ENCODE measurements at regions of chr13 and their contacts with region 1.

Region 1: GRCh38 chr13:99331881-99332293 is 24.7 kb upstream of the GPR183 start:
- DNase-seq: peak; percentile 79
- ATAC-seq: peak; percentile 89
- H3K4me3 ChIP-seq: no peak overlapping the region
- H3K27ac ChIP-seq: peak overlapping the region; percentile 66; the same call in 1 of the 2 replicates
- H3K4me1 ChIP-seq: peaks cover 21% of the 10 kb centered on the region
- H3K27me3 ChIP-seq: no peaks in the 10 kb centered on the region
- CTCF ChIP-seq: no peak
- EP300 ChIP-seq: peak; percentile 39 to 52; a peak in 2 of 4 replicates
- POLR2A ChIP-seq: no peak
- RAD21 ChIP-seq: no peak

Region 2: DNA sequence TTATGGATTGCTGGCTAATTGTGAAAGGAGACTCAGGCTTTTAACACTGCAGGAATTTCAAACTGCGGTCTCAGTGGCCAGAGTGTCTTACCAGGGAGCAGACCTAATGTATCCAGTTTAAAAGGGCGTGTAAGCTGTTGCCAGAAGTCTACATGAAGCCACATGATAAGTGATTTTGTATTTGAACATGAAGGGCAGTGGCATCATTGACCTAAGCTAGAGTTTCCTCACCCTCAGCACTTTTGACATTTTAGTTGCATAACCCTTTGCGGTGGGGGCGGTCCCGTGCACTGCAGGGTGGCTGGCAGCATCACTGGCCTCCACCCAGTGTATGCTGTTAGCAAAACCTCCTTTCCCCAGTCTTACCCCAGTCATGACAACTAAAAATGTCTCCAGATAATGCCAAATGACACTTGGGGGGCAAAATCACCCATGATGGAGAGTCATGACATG is 50.0 kb before region 1 on chr13:
- CTCF ChIA-PET with region 1: interaction called, 4 read pairs
- POLR2A ChIA-PET with region 1: no interaction called
- RAD21 ChIA-PET with region 1: interaction called, 7 read pairs
- SMC1A ChIA-PET with region 1: interaction called, 10 read pairs
- in situ Hi-C with region 1: no loop called
- intact Hi-C with region 1: no loop called
- DNase-seq: no peak
- ATAC-seq: peak; percentile 89
- H3K4me3 ChIP-seq: peak overlapping the region; percentile 8
- H3K27ac ChIP-seq: peak overlapping the region; percentile 79
- H3K4me1 ChIP-seq: peaks cover 53% of the 10 kb centered on the region
- H3K27me3 ChIP-seq: no peaks in the 10 kb centered on the region
- CTCF ChIP-seq: no peak
- EP300 ChIP-seq: no peak
- POLR2A ChIP-seq: no peak
- RAD21 ChIP-seq: no peak

Region 3: DNA sequence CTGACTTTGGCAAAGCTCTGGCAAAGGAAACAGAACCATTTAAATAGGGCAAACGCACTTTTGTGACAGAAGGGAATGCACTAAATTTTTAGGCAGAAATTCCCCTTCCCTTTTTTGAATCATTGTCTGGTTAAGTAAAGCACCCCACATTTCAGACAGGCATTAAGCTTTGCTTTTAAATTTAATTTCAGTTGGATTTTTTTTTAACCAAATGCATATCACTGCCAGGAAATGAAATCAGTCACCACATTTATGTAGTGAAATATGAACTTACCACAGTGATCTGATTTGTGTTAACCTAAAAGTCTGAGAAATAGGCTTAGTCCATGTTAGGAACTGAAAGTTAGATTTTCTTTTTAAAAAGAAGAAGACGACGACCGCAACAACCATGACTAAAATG is 35.5 kb before region 1 on chr13:
- CTCF ChIA-PET with region 1: interaction called, 11 read pairs
- POLR2A ChIA-PET with region 1: interaction called, 5 read pairs
- RAD21 ChIA-PET with region 1: interaction called, 126 read pairs
- SMC1A ChIA-PET with region 1: interaction called, 118 read pairs
- in situ Hi-C with region 1: no loop called
- intact Hi-C with region 1: no loop called
- DNase-seq: no peak
- ATAC-seq: peak; percentile 15
- H3K4me3 ChIP-seq: peak overlapping the region; percentile 58; the same call in 1 of the 2 replicates
- H3K27ac ChIP-seq: peak overlapping the region; percentile 62
- H3K4me1 ChIP-seq: peaks cover 14% of the 10 kb centered on the region
- H3K27me3 ChIP-seq: no peaks in the 10 kb centered on the region
- CTCF ChIP-seq: no peak
- EP300 ChIP-seq: no peak
- POLR2A ChIP-seq: no peak
- RAD21 ChIP-seq: peak; percentile 2; the same call in 1 of the 2 replicates

Region 4: DNA sequence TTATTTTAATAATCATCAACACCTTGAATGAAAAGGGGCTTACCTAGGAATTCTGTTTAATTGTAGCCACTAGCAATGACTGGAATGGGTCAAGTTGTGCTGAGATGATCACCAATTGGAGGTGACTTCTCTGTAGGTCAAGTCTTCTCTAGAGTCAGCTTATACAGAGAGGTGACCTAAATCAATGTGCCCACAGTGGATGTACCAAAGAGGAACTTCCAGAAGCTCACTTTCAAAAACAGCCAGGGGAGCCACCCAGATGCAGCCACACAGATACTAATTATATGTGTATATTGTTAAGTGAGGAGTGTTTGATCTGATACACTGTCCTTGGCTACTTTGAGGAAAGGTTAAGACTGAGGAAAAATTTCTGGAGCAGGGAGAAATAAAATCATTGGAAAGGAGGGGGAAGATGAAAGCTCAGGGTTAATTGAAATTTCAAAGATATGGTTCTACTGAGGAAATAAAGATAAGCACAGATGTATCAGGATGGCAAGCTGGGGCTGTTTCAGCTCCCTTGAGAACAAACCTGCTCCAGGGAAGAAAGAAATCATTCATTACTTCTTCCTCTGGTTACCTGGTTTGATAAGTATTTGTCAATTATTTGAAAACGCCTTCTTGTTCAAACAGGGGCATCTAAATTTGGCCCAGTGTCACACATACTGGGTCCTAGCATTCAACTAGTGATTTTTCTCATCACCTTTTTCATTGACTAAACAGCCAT is 29.8 kb before region 1 on chr13:
- CTCF ChIA-PET with region 1: interaction called, 11 read pairs
- POLR2A ChIA-PET with region 1: interaction called, 24 read pairs
- RAD21 ChIA-PET with region 1: interaction called, 126 read pairs
- SMC1A ChIA-PET with region 1: interaction called, 118 read pairs
- in situ Hi-C with region 1: no loop called
- intact Hi-C with region 1: no loop called
- DNase-seq: no peak
- ATAC-seq: peak; percentile 39
- H3K4me3 ChIP-seq: peak overlapping the region; percentile 98
- H3K27ac ChIP-seq: peak overlapping the region; percentile 93
- H3K4me1 ChIP-seq: peaks cover 18% of the 10 kb centered on the region
- H3K27me3 ChIP-seq: no peaks in the 10 kb centered on the region
- CTCF ChIP-seq: no peak
- EP300 ChIP-seq: no peak
- POLR2A ChIP-seq: no peak
- RAD21 ChIP-seq: no peak

Region 5: GRCh38 chr13:99347911-99348451 is 16.1 kb after region 1 on chr13:
- CTCF ChIA-PET with region 1: interaction called, 12 read pairs
- POLR2A ChIA-PET with region 1: interaction called, 10 read pairs
- RAD21 ChIA-PET with region 1: interaction called, 47 read pairs
- SMC1A ChIA-PET with region 1: interaction called, 64 read pairs
- in situ Hi-C with region 1: no loop called
- intact Hi-C with region 1: no loop called
- DNase-seq: no peak
- ATAC-seq: peak; percentile 79
- H3K4me3 ChIP-seq: no peak overlapping the region
- H3K27ac ChIP-seq: peak overlapping the region; percentile 54
- H3K4me1 ChIP-seq: peaks cover 31% of the 10 kb centered on the region
- H3K27me3 ChIP-seq: no peaks in the 10 kb centered on the region
- CTCF ChIP-seq: no peak
- EP300 ChIP-seq: no peak
- POLR2A ChIP-seq: no peak
- RAD21 ChIP-seq: no peak

Region 6: DNA sequence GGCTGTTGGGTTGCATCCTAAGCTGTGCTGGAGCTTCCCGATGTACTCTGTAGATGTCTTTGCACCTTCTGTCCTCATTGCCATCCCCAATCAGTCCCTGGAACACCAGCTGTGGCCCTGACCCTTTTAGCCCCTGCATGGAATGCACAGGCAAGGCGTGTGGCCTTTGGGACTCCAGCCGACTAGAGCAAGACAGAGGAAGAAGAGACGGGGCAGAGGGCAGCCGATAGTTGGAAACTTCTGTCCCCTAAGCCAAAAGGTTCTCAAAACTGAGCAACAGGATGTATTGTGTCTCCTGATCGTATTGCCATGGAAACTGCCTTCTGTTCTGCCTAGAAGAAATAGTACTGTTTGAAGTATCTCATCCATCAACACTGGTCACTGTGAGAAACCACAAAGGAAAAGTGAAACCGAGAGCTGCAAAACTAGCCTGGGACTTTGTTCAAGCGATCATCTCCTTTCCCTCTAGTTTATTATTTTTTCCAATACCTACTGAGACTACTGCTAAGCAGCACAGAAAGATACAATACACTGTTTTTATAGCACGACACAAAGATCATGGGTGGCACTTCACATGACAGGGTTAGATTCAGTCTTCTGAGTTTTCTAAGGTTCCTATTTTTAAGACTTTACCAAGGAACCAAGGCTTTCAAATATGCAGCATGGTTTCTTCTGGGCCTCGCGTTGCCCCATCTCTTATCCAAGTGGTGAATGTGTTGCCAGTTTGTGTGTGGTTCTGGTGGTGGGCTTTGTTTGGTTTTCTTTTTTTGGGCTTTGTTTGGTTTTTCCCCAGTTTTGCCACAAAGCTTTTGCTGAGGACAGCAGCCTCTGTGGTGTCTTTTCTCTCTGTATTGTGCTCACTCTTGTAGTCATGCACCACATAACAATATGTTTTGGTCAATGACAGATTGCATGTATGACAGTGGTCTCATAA is 24.5 kb after region 1 on chr13:
- CTCF ChIA-PET with region 1: interaction called, 22 read pairs
- POLR2A ChIA-PET with region 1: interaction called, 10 read pairs
- RAD21 ChIA-PET with region 1: interaction called, 47 read pairs
- SMC1A ChIA-PET with region 1: interaction called, 64 read pairs
- in situ Hi-C with region 1: no loop called
- intact Hi-C with region 1: no loop called
- DNase-seq: peak; percentile 92
- ATAC-seq: peak; percentile 81
- H3K4me3 ChIP-seq: peak overlapping the region; percentile 41; the same call in 1 of the 2 replicates
- H3K27ac ChIP-seq: peak overlapping the region; percentile 81
- H3K4me1 ChIP-seq: peaks cover 65% of the 10 kb centered on the region
- H3K27me3 ChIP-seq: no peaks in the 10 kb centered on the region
- CTCF ChIP-seq: no peak
- EP300 ChIP-seq: peak; percentile 43 to 83; a peak in 3 of 4 replicates
- POLR2A ChIP-seq: no peak
- RAD21 ChIP-seq: no peak

Region 7: GRCh38 chr13:99522298-99522697 is 190.4 kb after region 1 on chr13:
- CTCF ChIA-PET with region 1: no interaction called
- POLR2A ChIA-PET with region 1: no interaction called
- RAD21 ChIA-PET with region 1: no interaction called
- SMC1A ChIA-PET with region 1: no interaction called
- in situ Hi-C with region 1: no loop called
- intact Hi-C with region 1: no loop called
- DNase-seq: no peak
- ATAC-seq: no peak
- H3K4me3 ChIP-seq: no peak overlapping the region
- H3K27ac ChIP-seq: no peak overlapping the region
- H3K4me1 ChIP-seq: no peaks in the 10 kb centered on the region
- H3K27me3 ChIP-seq: no peaks in the 10 kb centered on the region
- CTCF ChIP-seq: no peak
- EP300 ChIP-seq: no peak
- POLR2A ChIP-seq: no peak
- RAD21 ChIP-seq: no peak

Region 8: DNA sequence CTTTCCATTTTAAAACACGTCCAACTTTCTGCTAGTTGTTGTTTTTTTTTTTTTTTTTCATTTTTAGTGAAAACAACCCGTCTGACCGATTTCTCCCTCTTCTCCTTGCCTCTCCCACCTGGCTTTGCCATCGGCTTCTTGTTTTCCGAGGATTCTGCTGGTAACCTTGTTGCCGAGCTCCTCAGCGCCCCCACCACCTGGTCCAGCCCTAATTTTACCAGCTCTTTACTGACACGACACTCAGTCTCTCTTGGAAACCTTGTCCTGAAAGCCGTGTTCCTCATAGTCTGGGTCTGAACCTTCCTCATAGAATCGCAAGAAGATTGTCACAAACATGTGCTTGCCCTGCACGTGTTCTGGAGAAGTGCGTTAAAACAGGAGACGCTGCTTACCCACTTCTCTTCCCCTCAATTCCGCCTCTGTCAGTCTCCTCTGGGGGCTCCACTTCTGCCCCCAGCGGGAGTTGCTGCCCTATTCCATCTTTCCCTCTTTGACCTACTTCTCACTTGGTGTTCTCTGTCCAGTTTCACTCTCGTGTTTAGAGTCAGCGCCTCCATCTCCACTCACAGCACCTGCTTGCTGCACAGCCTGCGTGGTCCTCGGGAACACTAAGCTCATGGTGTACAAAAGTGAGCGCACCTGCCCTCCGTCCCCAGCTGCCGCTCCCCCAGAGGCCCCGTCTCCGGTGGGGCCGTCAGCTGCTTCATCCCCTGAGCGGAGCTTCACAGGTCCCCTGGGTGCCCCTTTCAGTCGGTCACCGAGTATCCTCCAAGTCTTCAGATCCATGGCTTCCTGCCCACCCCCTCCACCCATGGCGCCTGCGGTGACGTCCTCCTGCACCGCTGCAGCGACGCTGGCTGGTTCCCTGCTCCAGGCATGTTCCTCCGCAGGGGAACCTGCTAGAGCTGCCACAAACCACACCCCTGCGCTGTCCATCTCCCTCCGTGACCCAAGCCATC is 234.5 kb after region 1 on chr13:
- CTCF ChIA-PET with region 1: no interaction called
- POLR2A ChIA-PET with region 1: no interaction called
- RAD21 ChIA-PET with region 1: no interaction called
- SMC1A ChIA-PET with region 1: no interaction called
- in situ Hi-C with region 1: no loop called
- intact Hi-C with region 1: no loop called
- DNase-seq: no peak
- ATAC-seq: no peak
- H3K4me3 ChIP-seq: no peak overlapping the region
- H3K27ac ChIP-seq: no peak overlapping the region
- H3K4me1 ChIP-seq: no peaks in the 10 kb centered on the region
- H3K27me3 ChIP-seq: no peaks in the 10 kb centered on the region
- CTCF ChIP-seq: no peak
- EP300 ChIP-seq: no peak
- POLR2A ChIP-seq: peak; percentile 37; the same call in 1 of the 2 replicates
- RAD21 ChIP-seq: no peak

Measured in GM12878 (cell line).